T-cell (primary cell): ENCODE measurements at regions of chr1 and their contacts with region 1.

Region 1: GRCh38 chr1:245942856-245943255 is 564.2 kb downstream of the SMYD3 start:
- DNase-seq: peak in 1 of 35 experiments; percentile 58
- ATAC-seq: peak in 2 of 4 experiments; percentile 27 to 88
- H3K4me3 ChIP-seq: no peak overlapping the region
- H3K4me3 Mint-ChIP-seq: peak overlapping the region in 1 of 3 donors; percentile 34
- H3K27ac ChIP-seq: no peak overlapping the region
- H3K27ac Mint-ChIP-seq: peak overlapping the region in 1 of 2 donors; percentile 5
- H3K4me1 ChIP-seq: peaks cover 0 to 2% of the 10 kb centered on the region in 2 experiments
- H3K4me1 Mint-ChIP-seq: peaks cover 21 to 26% (median 25%) of the 10 kb centered on the region in 3 donors
- H3K27me3 ChIP-seq: no peaks in the 10 kb centered on the region
- H3K27me3 Mint-ChIP-seq: no peaks in the 10 kb centered on the region

Region 2: DNA sequence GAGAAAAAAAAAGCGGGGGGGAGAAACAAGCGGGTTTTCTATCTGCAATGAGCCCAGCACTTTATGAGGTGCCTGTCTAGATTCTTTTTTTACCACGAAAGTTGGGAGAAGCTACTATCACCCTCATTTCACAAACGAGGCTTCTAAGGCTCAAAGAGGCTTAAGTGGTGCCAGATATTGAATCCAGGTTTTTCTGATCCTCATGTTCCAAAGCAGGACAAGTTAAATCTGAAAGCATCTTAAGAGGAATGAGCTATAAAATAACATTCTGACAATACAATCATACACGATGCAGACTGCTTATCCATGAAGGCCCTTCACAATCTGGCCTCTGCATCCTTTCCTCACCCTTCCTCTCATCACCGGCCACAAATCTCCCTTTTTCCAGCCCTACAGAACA is 15.2 kb after region 1 on chr1:
- CTCF ChIA-PET with region 1: no interaction called
- POLR2A ChIA-PET with region 1: interaction called in 1 of 2 experiments, 14 read pairs
- DNase-seq: no peak
- ATAC-seq: no peak
- H3K4me3 ChIP-seq: no peak overlapping the region
- H3K4me3 Mint-ChIP-seq: no peak overlapping the region
- H3K27ac ChIP-seq: no peak overlapping the region
- H3K27ac Mint-ChIP-seq: no peak overlapping the region
- H3K4me1 ChIP-seq: peaks cover 22 to 27% of the 10 kb centered on the region in 2 experiments
- H3K4me1 Mint-ChIP-seq: peaks cover 5 to 22% (median 20%) of the 10 kb centered on the region in 3 donors
- H3K27me3 ChIP-seq: no peaks in the 10 kb centered on the region
- H3K27me3 Mint-ChIP-seq: no peaks in the 10 kb centered on the region